ENCODE measurements at regions of chr7 and their contacts with region 1.

Region 1: DNA sequence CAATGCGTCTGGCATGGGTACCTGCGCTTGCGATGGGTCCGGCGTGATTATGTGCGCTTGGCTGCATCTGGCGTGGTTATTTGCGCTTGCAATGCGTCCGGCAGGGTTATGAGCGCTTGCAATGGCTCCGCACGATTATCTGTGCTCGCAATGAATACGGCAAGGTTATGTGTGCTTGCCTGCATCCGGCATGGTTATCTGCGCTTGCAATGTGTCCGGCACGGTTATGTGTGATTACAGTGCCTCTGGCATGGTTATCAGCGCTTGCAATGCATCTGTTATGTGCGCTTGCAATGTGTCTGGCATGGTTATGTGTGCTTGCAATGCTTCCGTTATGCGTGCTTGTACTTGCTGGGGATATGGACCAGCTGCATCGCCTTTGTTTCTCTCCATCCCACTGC is 37.7 kb downstream of the RBAK start:
- DNase-seq: no peak
- ATAC-seq: no peak
- H3K4me3 ChIP-seq: no peak overlapping the region
- H3K27ac ChIP-seq: no peak overlapping the region
- H3K4me1 ChIP-seq: peaks cover 8% of the 10 kb centered on the region
- H3K27me3 ChIP-seq: peaks cover 9 to 15% of the 10 kb centered on the region in 2 experiments; a peak in 4 of 5 replicates
- CTCF ChIP-seq: no peak
- EP300 ChIP-seq: no peak
- POLR2A ChIP-seq: no peak
- RAD21 ChIP-seq: no peak

Region 2: DNA sequence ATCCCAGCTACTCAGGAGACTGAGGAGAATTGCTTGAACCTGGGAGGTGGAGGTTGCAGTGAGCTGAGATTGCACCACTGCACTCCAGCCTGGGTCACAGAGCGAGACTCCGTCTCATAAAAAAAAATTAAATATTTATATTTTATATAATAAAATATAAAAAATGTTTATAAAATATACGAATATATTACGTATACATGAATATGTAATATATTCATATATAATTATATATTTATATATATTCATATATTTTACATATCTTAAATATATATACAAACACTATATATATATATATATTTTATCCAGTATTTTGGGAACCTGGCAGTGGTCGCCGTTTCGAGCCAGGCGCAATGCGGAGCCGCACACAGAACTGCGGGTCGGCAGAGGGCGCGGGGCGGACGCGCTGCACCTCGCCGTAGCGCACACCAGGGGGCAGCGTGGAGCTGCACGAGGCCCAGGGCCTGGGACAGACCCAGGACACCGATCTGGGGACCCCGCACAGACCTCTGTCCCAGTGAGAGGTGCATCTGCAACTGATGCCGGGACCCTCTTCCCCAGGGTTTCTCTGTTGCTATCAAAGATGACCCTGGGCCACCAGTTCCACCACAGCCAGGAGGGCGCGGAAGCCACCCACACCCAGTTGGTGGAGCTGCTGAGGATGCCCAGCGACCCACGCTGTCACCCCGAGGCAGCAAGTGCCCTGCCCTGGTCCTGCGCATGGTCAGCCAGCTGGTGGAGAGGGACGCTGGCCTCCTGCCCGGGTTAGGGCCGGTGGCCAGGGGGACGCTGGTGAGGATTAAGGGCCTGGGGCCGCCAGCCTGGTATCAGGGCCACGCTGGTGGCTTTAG is 285.2 kb before region 1 on chr7:
- CTCF ChIA-PET with region 1: interaction called, 17 read pairs
- POLR2A ChIA-PET with region 1: no interaction called
- in situ Hi-C with region 1: loop called (anchors 10 kb)
- intact Hi-C with region 1: no loop called
- DNase-seq: peak; percentile 31
- ATAC-seq: peak; percentile 76
- H3K4me3 ChIP-seq: peak overlapping the region in 1 of 3 experiments; percentile 26; a peak in 1 of 6 replicates
- H3K27ac ChIP-seq: no peak overlapping the region
- H3K4me1 ChIP-seq: peaks cover 8% of the 10 kb centered on the region
- H3K27me3 ChIP-seq: peaks cover 1 to 12% of the 10 kb centered on the region in 2 experiments; a peak in 2 of 5 replicates
- CTCF ChIP-seq: peak; percentile 92
- EP300 ChIP-seq: no peak
- POLR2A ChIP-seq: no peak
- RAD21 ChIP-seq: peak; percentile 82

Region 3: GRCh38 chr7:4830176-4830575 is 253.1 kb before region 1 on chr7:
- CTCF ChIA-PET with region 1: interaction called, 41 read pairs
- POLR2A ChIA-PET with region 1: no interaction called
- in situ Hi-C with region 1: loop called (anchors 5 kb)
- intact Hi-C with region 1: loop called (anchors 1 kb)
- DNase-seq: peak; percentile 78
- ATAC-seq: peak; percentile 97
- H3K4me3 ChIP-seq: no peak overlapping the region
- H3K27ac ChIP-seq: no peak overlapping the region
- H3K4me1 ChIP-seq: no peaks in the 10 kb centered on the region
- H3K27me3 ChIP-seq: peaks cover 0 to 20% of the 10 kb centered on the region in 2 experiments; a peak in 2 of 5 replicates
- CTCF ChIP-seq: peak; percentile 100
- EP300 ChIP-seq: no peak
- POLR2A ChIP-seq: no peak
- RAD21 ChIP-seq: peak; percentile 96

Region 4: DNA sequence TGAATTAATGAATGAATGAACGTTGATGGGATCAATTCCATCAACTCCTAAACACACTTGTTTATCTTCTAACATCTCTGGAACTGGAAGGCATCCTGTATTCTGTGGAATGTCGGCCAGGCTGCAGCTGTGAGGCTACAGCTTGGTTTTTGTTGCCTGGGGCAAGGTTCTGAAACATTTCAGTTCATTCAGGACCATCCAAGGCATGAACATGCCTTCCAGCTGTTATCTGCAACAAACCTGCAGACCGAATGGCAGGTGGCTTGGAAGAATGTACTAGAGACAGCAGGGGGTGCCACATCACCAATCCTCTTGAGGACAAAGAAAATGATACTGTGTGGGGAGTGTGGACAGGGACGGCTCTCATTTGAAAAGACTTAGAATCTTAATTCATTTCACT is 233.9 kb before region 1 on chr7:
- CTCF ChIA-PET with region 1: interaction called, 3 read pairs
- POLR2A ChIA-PET with region 1: no interaction called
- in situ Hi-C with region 1: no loop called
- intact Hi-C with region 1: loop called (anchors 1 kb)
- DNase-seq: peak; percentile 48
- ATAC-seq: peak; percentile 77
- H3K4me3 ChIP-seq: no peak overlapping the region
- H3K27ac ChIP-seq: no peak overlapping the region
- H3K4me1 ChIP-seq: no peaks in the 10 kb centered on the region
- H3K27me3 ChIP-seq: peaks cover 0 to 26% of the 10 kb centered on the region in 2 experiments; a peak in 2 of 5 replicates
- CTCF ChIP-seq: peak; percentile 76
- EP300 ChIP-seq: no peak
- POLR2A ChIP-seq: no peak
- RAD21 ChIP-seq: 0 out of 2 replicates have a peak, but pooled peaks have one; percentile 17

Region 5: DNA sequence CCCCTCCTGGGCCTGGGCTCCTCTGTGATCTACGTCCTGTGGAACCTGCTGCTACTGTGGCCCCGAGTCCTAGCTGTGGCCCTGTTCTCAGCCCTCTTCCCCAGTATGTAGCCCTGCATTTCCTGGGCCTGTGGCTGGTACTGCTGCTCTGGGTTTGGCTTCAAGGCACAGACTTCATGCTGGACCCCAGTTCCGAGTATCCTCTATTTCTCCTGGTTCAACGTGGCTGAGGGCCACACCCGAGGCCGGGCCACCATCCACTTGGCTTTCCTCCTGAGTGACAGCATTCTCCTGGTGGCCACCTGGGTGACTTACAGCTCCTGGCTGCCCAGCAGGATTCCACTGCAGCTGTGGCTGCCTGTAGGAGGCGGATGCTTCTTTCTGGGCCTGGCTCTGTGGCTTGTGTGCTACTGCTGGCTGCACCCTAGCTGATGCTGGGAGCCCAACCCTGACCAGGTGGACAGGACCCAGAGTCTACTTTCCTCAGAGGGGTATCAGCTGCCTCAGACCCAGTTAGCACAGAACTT is 86.6 kb before region 1 on chr7:
- CTCF ChIA-PET with region 1: no interaction called
- POLR2A ChIA-PET with region 1: no interaction called
- in situ Hi-C with region 1: no loop called
- intact Hi-C with region 1: no loop called
- DNase-seq: no peak
- ATAC-seq: peak; percentile 54
- H3K4me3 ChIP-seq: no peak overlapping the region
- H3K27ac ChIP-seq: no peak overlapping the region
- H3K4me1 ChIP-seq: peaks cover 8% of the 10 kb centered on the region; the same call in 1 of the 2 replicates
- H3K27me3 ChIP-seq: no peaks in the 10 kb centered on the region
- CTCF ChIP-seq: no peak
- EP300 ChIP-seq: no peak
- POLR2A ChIP-seq: no peak
- RAD21 ChIP-seq: no peak

Measured in HepG2 (cell line).